MCF 10A (cell line): ENCODE measurements at regions of chr13 and their contacts with region 1.

Region 1: DNA sequence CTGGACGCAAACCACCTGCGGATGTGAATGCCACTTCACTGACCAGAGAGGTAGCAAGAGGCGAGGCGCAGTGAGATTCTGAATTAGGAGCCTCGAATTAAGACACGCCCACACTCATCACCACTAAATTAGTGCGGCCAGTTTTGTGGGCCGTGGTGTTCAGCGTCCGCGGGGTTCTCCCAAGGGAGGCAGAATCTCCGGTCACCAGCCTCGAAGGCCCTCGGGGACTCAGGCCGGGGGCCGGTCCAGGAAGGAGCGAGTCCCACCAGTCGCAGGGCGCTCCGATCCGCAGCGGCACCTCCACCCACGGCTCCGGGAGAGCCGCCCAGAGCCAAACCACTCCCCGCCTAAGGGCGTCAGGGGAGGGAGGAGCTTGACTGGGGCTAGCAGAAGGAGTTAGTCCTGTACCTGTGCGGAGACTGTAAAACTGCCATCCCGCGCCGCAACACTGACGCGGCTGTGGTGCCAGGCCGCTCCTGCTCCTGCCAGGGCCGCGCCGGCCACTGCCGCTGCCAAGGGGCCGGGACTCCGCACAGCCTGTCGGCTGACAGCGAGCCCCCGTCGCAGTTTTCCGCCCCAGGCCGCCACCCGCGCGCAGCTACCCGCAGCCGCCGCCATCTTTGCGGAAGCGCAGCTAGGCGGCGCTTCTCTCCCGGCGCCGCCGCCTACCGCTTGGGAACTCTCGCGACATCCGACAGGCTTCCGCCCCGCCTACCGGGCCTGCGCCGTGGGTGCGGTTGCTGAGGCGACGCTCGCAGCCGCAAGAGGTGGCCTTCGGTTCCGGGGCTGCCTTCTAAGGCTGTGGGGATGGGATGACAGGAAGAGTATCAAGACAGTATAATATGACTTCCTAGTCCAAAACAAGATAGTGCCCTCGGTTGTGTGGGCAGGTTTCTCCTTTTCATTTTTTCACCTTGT is at the start of gene MICU2:
- DNase-seq: peak; percentile 94
- H3K4me3 Mint-ChIP-seq: peak within 1 kb of the TSS; percentile 73
- H3K27ac Mint-ChIP-seq: peak within 1 kb of the TSS; percentile 75
- H3K4me1 Mint-ChIP-seq: peaks cover 24% of the 10 kb centered on the region
- H3K27me3 Mint-ChIP-seq: no peaks in the 10 kb centered on the region
- CTCF ChIP-seq: no peak
- total RNA-seq, gene MICU2: 18.7 and 21.8 TPM in 2 replicates

Region 2: DNA sequence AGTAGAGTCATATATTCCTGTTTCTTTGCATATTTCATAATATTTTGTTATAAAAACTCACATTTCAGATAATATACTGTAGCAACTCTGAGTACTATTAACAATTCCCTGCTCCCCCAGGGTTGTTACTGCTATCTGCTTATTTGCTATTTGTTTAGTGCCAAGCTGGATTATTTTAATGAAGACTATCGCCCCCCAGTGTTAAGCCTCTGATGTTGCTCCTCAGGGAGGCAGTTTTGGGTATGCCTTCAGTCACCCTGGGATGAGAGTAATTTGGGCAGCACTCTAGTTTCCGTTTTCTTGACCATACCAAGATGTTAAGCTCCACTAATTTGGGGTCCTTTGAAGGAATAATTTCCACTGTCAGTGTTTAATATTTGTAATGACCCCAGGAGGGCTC is 45.8 kb before region 1 on chr13:
- CTCF ChIA-PET with region 1: no interaction called
- POLR2A ChIA-PET with region 1: no interaction called
- intact Hi-C with region 1: no loop called
- DNase-seq: peak; percentile 49
- H3K4me3 Mint-ChIP-seq: no peak overlapping the region
- H3K27ac Mint-ChIP-seq: no peak overlapping the region
- H3K4me1 Mint-ChIP-seq: peaks cover 6% of the 10 kb centered on the region
- H3K27me3 Mint-ChIP-seq: no peaks in the 10 kb centered on the region
- CTCF ChIP-seq: peak; percentile 39

Region 3: DNA sequence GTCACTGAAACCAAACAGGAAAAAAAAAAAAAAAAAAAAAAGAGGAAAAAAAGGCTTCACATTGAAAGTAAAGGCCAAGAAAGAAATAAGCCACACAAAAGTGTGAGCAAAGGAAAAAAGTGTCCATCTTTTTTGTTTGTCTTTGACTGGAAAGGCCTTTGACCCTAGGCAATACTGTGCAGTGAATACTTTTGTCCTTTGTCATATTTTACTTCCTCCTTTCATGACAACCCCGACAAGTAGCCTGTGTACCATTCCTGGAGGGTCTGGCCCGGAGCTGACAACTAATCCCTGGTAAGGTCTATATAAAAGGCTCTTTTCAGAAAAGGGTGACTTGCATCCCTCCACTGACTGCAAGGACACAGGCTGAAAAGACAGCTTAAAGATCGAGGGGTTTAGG is 13.1 kb after region 1 on chr13:
- CTCF ChIA-PET with region 1: interaction called, 4 read pairs
- POLR2A ChIA-PET with region 1: interaction called, 17 read pairs
- intact Hi-C with region 1: no loop called
- DNase-seq: no peak
- H3K4me3 Mint-ChIP-seq: no peak overlapping the region
- H3K27ac Mint-ChIP-seq: no peak overlapping the region
- H3K4me1 Mint-ChIP-seq: no peaks in the 10 kb centered on the region
- H3K27me3 Mint-ChIP-seq: no peaks in the 10 kb centered on the region
- CTCF ChIP-seq: no peak

Region 4: DNA sequence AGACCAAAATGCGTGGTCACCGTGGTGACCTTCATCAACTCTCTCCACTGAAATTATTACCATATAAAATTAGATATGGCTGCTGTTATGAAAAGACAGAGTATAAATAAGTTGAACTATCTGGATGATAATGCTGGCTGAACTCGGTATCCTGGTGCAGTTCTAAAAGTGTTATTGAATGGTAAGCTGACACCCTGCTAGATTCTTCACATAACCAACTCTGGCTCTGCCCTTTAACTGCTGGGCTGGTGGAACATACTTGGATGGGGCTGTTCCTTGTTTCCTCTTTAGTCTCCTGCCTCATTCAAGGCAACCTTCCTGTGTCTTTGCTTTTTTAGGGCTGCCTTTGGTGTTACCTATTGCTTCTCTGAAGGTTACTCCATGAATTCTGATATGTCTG is 174.0 kb after region 1 on chr13:
- CTCF ChIA-PET with region 1: no interaction called
- POLR2A ChIA-PET with region 1: no interaction called
- intact Hi-C with region 1: no loop called
- DNase-seq: no peak
- H3K4me3 Mint-ChIP-seq: no peak overlapping the region
- H3K27ac Mint-ChIP-seq: no peak overlapping the region
- H3K4me1 Mint-ChIP-seq: no peaks in the 10 kb centered on the region
- H3K27me3 Mint-ChIP-seq: no peaks in the 10 kb centered on the region
- CTCF ChIP-seq: no peak